CD8-positive, alpha-beta T cell (primary cell): ENCODE measurements at regions of chr4 and their contacts with region 1.

Region 1: GRCh38 chr4:139030614-139031235 is 15.1 kb downstream of the NOCT start:
- DNase-seq: peak; percentile 50 to 88 (median 76)
- ATAC-seq: peak; percentile 81
- H3K4me3 ChIP-seq: no peak overlapping the region
- H3K4me3 Mint-ChIP-seq: no peak overlapping the region
- H3K27ac ChIP-seq: no peak overlapping the region
- H3K27ac Mint-ChIP-seq: no peak overlapping the region
- H3K4me1 ChIP-seq: peaks cover 2% of the 10 kb centered on the region
- H3K4me1 Mint-ChIP-seq: peaks cover 12% of the 10 kb centered on the region
- H3K27me3 ChIP-seq: no peaks in the 10 kb centered on the region
- H3K27me3 Mint-ChIP-seq: no peaks in the 10 kb centered on the region
- CTCF ChIP-seq: peak; percentile 81

Region 2: GRCh38 chr4:138007572-138007971 is 1023.2 kb before region 1 on chr4:
- CTCF ChIA-PET with region 1: no interaction called
- POLR2A ChIA-PET with region 1: no interaction called
- intact Hi-C with region 1: no loop called
- DNase-seq: no peak
- ATAC-seq: no peak
- H3K4me3 ChIP-seq: no peak overlapping the region
- H3K4me3 Mint-ChIP-seq: no peak overlapping the region
- H3K27ac ChIP-seq: no peak overlapping the region
- H3K27ac Mint-ChIP-seq: no peak overlapping the region
- H3K4me1 ChIP-seq: no peaks in the 10 kb centered on the region
- H3K4me1 Mint-ChIP-seq: no peaks in the 10 kb centered on the region
- H3K27me3 ChIP-seq: no peaks in the 10 kb centered on the region
- H3K27me3 Mint-ChIP-seq: no peaks in the 10 kb centered on the region
- CTCF ChIP-seq: no peak

Region 3: DNA sequence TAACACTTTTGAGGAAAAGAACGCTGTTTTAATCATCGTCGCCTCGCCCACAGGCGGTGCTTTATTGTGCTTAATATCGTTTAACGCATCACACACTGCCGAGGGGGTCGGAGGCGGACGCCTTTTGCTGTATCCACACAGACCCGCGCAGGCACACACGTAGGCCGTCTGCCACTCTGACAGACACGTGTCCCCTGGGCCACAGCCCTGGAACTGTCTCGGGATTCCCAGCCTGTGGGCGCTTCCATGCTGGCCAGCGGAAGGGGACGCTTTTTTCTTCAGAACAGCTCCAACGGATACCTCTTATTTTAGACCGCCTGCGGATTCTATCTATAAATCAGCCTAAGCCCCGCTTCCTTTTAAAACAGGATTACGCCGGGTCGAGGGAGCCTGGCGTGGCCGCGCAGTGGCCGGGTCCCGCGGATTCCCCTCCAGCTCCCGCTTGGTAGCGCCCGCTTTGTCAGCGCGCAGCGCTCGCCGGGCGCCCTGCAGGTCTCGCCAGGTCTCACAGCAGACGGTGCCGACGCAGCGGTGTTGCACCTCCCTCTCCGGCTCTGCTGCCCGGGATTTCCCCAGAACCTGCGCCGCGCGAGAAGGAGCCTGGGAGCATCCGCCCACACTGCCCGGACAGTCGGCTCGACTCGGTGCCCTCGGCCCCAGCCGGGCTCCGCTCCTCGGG is 15.3 kb before region 1 on chr4 and contains the start of gene NOCT:
- CTCF ChIA-PET with region 1: interaction called, 57 read pairs
- POLR2A ChIA-PET with region 1: interaction called, 9 read pairs
- intact Hi-C with region 1: loop called in 1 of 2 experiments (anchors 1 kb)
- DNase-seq: peak; percentile 76 to 98 (median 90)
- ATAC-seq: peak; percentile 86
- H3K4me3 ChIP-seq: peak within 1 kb of the TSS; percentile 52 to 67
- H3K4me3 Mint-ChIP-seq: peak within 1 kb of the TSS; percentile 91
- H3K27ac ChIP-seq: peak within 1 kb of the TSS; percentile 75 to 92
- H3K27ac Mint-ChIP-seq: peak within 1 kb of the TSS; percentile 99
- H3K4me1 ChIP-seq: peaks cover 7% of the 10 kb centered on the region
- H3K4me1 Mint-ChIP-seq: peaks cover 30% of the 10 kb centered on the region
- H3K27me3 ChIP-seq: no peaks in the 10 kb centered on the region
- H3K27me3 Mint-ChIP-seq: no peaks in the 10 kb centered on the region
- CTCF ChIP-seq: no peak
- total RNA-seq, gene NOCT: 45.7 to 49.6 TPM

Region 4: GRCh38 chr4:139083956-139084803 is 53.5 kb after region 1 on chr4:
- CTCF ChIA-PET with region 1: interaction called, 23 read pairs
- POLR2A ChIA-PET with region 1: interaction called, 3 read pairs
- intact Hi-C with region 1: loop called (anchors 1 to 2 kb)
- DNase-seq: peak; percentile 54 to 92 (median 80)
- ATAC-seq: peak; percentile 41
- H3K4me3 ChIP-seq: peak overlapping the region; percentile 80 to 98
- H3K4me3 Mint-ChIP-seq: peak overlapping the region; percentile 87
- H3K27ac ChIP-seq: peak overlapping the region; percentile 93 to 96
- H3K27ac Mint-ChIP-seq: peak overlapping the region; percentile 94
- H3K4me1 ChIP-seq: peaks cover 25% of the 10 kb centered on the region
- H3K4me1 Mint-ChIP-seq: peaks cover 38% of the 10 kb centered on the region
- H3K27me3 ChIP-seq: no peaks in the 10 kb centered on the region
- H3K27me3 Mint-ChIP-seq: no peaks in the 10 kb centered on the region
- CTCF ChIP-seq: peak; percentile 18

Region 5: DNA sequence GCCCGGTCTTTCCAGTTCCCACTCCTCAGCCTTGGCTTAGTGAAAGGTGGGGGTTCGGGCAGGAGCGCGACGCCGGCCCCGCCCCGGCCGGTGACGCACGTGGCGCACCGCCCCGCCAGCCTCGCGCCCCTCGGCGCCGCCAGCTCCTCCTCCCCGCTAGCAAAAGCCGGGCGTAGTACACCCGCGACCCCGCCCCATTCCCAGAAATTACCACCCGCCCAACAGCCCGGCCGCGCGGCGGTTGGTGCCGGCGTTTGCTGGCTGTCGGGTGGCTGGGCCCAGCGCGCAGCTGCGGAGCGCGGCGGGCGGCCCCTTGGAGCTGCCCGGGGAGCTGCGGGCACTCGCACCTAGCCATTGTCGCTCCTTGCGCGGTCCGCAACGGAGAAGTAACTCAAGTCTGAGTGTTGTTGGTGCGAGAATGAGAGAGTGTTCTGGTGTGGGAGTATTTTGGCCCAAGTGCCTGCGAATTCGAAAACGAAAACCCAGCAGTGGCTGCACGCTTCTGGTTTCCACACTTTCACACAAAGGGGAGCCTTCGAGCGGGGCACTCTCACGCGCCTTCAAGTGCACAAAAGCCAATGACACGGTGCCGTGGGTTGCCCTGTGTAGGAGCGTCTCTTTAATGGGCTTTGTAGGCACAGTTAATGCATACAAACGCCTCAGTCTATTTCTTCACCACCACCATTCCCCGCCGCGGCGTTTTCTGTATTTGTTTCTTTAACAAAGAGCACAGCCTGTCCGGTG is 147.3 kb after region 1 on chr4:
- CTCF ChIA-PET with region 1: interaction called, 8 read pairs
- POLR2A ChIA-PET with region 1: no interaction called
- intact Hi-C with region 1: loop called in 1 of 2 experiments (anchors 5 kb)
- DNase-seq: peak; percentile 73 to 94 (median 88)
- ATAC-seq: peak; percentile 73
- H3K4me3 ChIP-seq: peak overlapping the region; percentile 73 to 99
- H3K4me3 Mint-ChIP-seq: peak overlapping the region; percentile 89
- H3K27ac ChIP-seq: peak overlapping the region; percentile 54 to 67
- H3K27ac Mint-ChIP-seq: peak overlapping the region; percentile 85
- H3K4me1 ChIP-seq: peaks cover 5% of the 10 kb centered on the region
- H3K4me1 Mint-ChIP-seq: peaks cover 19% of the 10 kb centered on the region
- H3K27me3 ChIP-seq: no peaks in the 10 kb centered on the region
- H3K27me3 Mint-ChIP-seq: no peaks in the 10 kb centered on the region
- CTCF ChIP-seq: no peak

Region 6: GRCh38 chr4:139301113-139301820 is 270.5 kb after region 1 on chr4 and contains the start of gene NAA15:
- CTCF ChIA-PET with region 1: interaction called, 62 read pairs
- POLR2A ChIA-PET with region 1: interaction called, 7 read pairs
- intact Hi-C with region 1: loop called in 1 of 2 experiments (anchors 2 kb)
- DNase-seq: peak; percentile 94 to 99 (median 97)
- ATAC-seq: peak; percentile 89
- H3K4me3 ChIP-seq: peak within 1 kb of the TSS; percentile 90 to 94
- H3K4me3 Mint-ChIP-seq: peak within 1 kb of the TSS; percentile 99
- H3K27ac ChIP-seq: peak within 1 kb of the TSS; percentile 75 to 96
- H3K27ac Mint-ChIP-seq: peak within 1 kb of the TSS; percentile 98
- H3K4me1 ChIP-seq: peaks cover 28% of the 10 kb centered on the region
- H3K4me1 Mint-ChIP-seq: peaks cover 60% of the 10 kb centered on the region
- H3K27me3 ChIP-seq: no peaks in the 10 kb centered on the region
- H3K27me3 Mint-ChIP-seq: no peaks in the 10 kb centered on the region
- CTCF ChIP-seq: no peak
- total RNA-seq, gene NAA15: 55.8 to 59.0 TPM

Region 7: DNA sequence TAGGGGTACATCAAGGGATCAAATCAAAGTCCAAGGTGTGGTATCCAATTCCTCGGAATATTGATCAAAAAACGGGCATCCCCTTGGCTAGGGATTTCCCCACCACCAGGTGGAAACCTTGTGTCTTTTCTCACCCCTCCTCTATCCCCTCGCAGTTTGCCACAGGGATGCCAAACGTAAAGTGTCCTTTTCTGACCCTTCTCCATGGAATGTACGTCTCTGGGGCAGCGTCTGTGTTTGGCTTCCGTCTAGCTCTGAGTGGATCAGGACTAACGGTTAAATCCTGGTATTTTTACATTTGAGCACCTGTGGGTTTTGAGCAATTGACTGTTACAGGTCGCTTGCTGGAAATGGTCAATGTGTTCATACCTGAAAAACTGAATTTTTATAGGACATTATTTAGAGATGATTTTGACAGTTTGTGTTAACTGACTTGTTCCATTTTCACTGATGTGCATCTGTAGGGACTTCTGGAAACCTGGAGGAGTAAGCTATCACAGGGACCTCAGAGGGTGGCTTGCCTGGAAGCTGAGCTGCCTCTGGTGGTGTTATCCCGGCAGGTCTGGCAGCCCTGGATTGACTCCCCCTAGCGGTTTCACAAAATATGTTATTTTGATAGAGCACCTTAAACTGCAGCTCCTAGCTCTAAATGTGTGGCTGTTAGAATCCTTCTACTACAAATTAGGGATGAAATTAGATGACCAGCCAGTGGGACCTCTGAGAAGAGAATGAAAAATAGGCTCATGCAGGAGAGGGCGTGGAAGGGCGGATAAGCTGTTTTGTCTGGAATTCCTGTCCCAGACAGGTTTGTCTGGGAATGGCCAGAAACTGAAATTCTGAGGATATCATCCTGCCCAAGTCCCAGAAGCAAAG is 626.1 kb after region 1 on chr4:
- CTCF ChIA-PET with region 1: interaction called, 34 read pairs
- POLR2A ChIA-PET with region 1: no interaction called
- intact Hi-C with region 1: no loop called
- DNase-seq: peak in 8 of 9 experiments; percentile 16 to 69 (median 48)
- ATAC-seq: peak; percentile 84
- H3K4me3 ChIP-seq: no peak overlapping the region
- H3K4me3 Mint-ChIP-seq: no peak overlapping the region
- H3K27ac ChIP-seq: no peak overlapping the region
- H3K27ac Mint-ChIP-seq: no peak overlapping the region
- H3K4me1 ChIP-seq: peaks cover 5% of the 10 kb centered on the region
- H3K4me1 Mint-ChIP-seq: peaks cover 15% of the 10 kb centered on the region
- H3K27me3 ChIP-seq: no peaks in the 10 kb centered on the region
- H3K27me3 Mint-ChIP-seq: peaks cover 2% of the 10 kb centered on the region
- CTCF ChIP-seq: peak; percentile 74